ENCODE measurements at regions of chr15 and their contacts with region 1.

Region 1: DNA sequence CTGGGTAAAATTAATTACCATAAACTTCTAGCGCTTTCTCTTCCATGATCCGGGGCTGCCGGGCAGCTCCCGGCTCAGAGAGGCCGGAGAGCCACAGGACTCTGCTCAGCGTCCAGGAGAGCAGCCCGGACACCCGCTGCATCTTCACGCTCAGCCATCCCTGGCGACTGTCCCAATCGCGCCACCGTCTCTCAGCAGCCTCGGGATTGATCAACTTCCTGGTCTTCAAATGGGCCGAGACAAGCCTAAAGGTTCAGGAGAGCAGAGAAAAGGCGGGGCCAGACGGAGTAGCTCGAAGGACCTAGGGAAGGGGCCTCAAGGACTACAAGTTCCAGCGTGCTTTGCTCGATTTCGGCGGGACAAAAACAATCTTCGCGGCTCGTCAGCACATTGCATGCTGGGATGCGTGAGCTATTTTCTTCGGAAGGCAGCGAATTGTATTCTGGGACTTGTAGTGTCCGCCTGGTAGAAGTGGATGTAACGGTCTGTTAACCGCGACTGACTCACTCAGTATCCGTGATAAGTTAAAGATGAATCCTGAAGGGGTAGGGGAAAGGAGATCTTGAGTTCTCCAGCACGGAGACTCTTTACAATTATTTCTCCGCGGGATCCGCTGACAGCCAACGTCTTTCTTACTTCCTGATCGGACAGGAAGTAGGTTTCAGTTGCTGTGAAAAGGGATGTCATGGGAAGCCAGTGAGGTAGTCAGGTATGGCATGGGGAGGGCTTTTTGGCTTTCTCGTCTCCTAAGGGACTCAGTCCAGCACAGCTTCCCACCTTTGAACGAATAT is at the start of gene CIAO2A:
- DNase-seq: peak; percentile 78
- ATAC-seq: peak; percentile 72
- H3K4me3 Mint-ChIP-seq: peak within 1 kb of the TSS; percentile 99
- H3K27ac Mint-ChIP-seq: peak within 1 kb of the TSS; percentile 98
- H3K4me1 Mint-ChIP-seq: peaks cover 93% of the 10 kb centered on the region
- H3K27me3 Mint-ChIP-seq: no peaks in the 10 kb centered on the region
- CTCF ChIP-seq: no peak
- total RNA-seq, gene CIAO2A: 58.4 and 63.2 TPM in 2 replicates

Region 2: DNA sequence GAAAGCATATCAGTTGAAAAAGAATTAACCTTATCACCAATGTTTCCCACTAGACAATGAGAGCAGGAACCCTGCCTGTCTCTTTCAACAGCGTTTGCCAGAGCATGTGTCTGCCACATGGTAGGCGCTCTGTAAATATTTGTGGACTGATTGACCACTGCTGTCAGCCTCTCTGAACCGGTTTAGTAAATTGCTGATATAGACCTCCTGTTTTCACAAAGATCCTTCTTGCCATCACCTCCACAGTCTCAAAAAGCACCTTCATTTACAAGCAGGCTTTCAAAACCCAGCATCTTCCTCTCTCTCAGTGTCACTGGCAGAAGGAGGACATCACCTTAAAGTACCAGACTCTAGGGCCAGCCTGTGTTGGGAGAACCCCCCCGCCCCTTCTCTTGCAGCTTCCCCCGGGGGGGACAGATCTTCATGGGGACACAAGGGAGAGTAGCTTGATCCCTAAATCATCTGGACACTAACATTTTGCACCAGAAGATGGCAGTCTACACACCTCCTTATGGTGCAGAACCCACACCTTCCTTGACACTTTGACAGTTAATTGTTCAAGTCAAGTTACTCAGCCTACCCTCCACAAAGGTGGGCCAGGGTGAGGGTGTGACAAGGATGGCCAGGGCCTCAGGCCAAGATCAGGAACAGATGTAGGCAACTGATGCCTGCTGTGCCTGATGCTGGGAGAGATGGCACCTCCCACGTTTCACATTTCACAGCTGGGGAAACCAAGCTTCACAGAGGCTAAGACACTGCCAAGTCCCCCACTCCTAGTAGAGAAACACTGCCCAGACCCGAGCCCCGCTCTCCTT is 627.2 kb before region 1 on chr15:
- CTCF ChIA-PET with region 1: no interaction called
- POLR2A ChIA-PET with region 1: interaction called, 5 read pairs
- intact Hi-C with region 1: loop called (anchors 5 kb)
- DNase-seq: no peak
- ATAC-seq: peak; percentile 93
- H3K4me3 Mint-ChIP-seq: no peak overlapping the region
- H3K27ac Mint-ChIP-seq: no peak overlapping the region
- H3K4me1 Mint-ChIP-seq: peaks cover 29% of the 10 kb centered on the region
- H3K27me3 Mint-ChIP-seq: no peaks in the 10 kb centered on the region
- CTCF ChIP-seq: peak; percentile 56

Region 3: GRCh38 chr15:63752075-63752684 is 341.6 kb before region 1 on chr15:
- CTCF ChIA-PET with region 1: interaction called, 18 read pairs
- POLR2A ChIA-PET with region 1: interaction called, 3 read pairs
- intact Hi-C with region 1: no loop called
- DNase-seq: no peak
- ATAC-seq: peak; percentile 83
- H3K4me3 Mint-ChIP-seq: no peak overlapping the region
- H3K27ac Mint-ChIP-seq: peak overlapping the region; percentile 59
- H3K4me1 Mint-ChIP-seq: peaks cover 3% of the 10 kb centered on the region
- H3K27me3 Mint-ChIP-seq: no peaks in the 10 kb centered on the region
- CTCF ChIP-seq: no peak

Region 4: GRCh38 chr15:63939531-63940130 is 154.2 kb before region 1 on chr15:
- CTCF ChIA-PET with region 1: no interaction called
- POLR2A ChIA-PET with region 1: no interaction called
- intact Hi-C with region 1: no loop called
- DNase-seq: no peak
- ATAC-seq: no peak
- H3K4me3 Mint-ChIP-seq: no peak overlapping the region
- H3K27ac Mint-ChIP-seq: peak overlapping the region; percentile 46
- H3K4me1 Mint-ChIP-seq: peaks cover 34% of the 10 kb centered on the region
- H3K27me3 Mint-ChIP-seq: no peaks in the 10 kb centered on the region
- CTCF ChIP-seq: no peak

Region 5: DNA sequence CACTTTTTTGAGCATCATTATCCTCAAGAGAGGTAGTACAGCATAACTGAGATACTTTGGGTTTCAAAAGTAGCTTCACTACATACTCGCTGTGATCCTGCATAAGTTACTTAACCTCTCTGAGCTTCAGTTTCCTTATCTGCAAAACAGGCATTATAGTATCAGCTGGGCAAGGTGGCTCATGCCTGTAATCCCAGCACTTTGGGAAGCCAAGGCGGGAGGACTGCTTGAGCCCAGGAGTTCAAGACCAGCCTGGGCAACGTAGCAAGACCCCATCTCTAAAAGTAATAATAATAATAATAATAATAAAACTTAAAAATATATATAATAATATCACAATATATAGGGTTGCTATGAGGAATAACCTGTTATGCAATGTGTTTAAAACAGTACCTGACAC is 11.1 kb before region 1 on chr15:
- CTCF ChIA-PET with region 1: no interaction called
- POLR2A ChIA-PET with region 1: interaction called, 11 read pairs
- intact Hi-C with region 1: no loop called
- DNase-seq: no peak
- ATAC-seq: no peak
- H3K4me3 Mint-ChIP-seq: no peak overlapping the region
- H3K27ac Mint-ChIP-seq: no peak overlapping the region
- H3K4me1 Mint-ChIP-seq: peaks cover 8% of the 10 kb centered on the region
- H3K27me3 Mint-ChIP-seq: no peaks in the 10 kb centered on the region
- CTCF ChIP-seq: no peak

Region 6: GRCh38 chr15:64153480-64154367 is 59.9 kb after region 1 on chr15:
- CTCF ChIA-PET with region 1: interaction called, 14 read pairs
- POLR2A ChIA-PET with region 1: interaction called, 78 read pairs
- intact Hi-C with region 1: loop called (anchors 1 kb)
- DNase-seq: peak; percentile 92
- ATAC-seq: peak; percentile 80
- H3K4me3 Mint-ChIP-seq: peak overlapping the region; percentile 86
- H3K27ac Mint-ChIP-seq: peak overlapping the region; percentile 91
- H3K4me1 Mint-ChIP-seq: peaks cover 69% of the 10 kb centered on the region
- H3K27me3 Mint-ChIP-seq: no peaks in the 10 kb centered on the region
- CTCF ChIP-seq: peak; percentile 61

Region 7: GRCh38 chr15:64387562-64388168 is 293.8 kb after region 1 on chr15 and contains the start of gene TRIP4:
- CTCF ChIA-PET with region 1: no interaction called
- POLR2A ChIA-PET with region 1: interaction called, 10 read pairs
- intact Hi-C with region 1: loop called (anchors 5 kb)
- DNase-seq: peak; percentile 92
- ATAC-seq: peak; percentile 100
- H3K4me3 Mint-ChIP-seq: peak within 1 kb of the TSS; percentile 98
- H3K27ac Mint-ChIP-seq: peak within 1 kb of the TSS; percentile 94
- H3K4me1 Mint-ChIP-seq: peaks cover 25% of the 10 kb centered on the region
- H3K27me3 Mint-ChIP-seq: no peaks in the 10 kb centered on the region
- CTCF ChIP-seq: no peak
- total RNA-seq, gene TRIP4: 26.3 and 35.0 TPM in 2 replicates

Region 8: GRCh38 chr15:65792130-65792987 is 1698.5 kb after region 1 on chr15 and contains the start of gene DENND4A:
- CTCF ChIA-PET with region 1: no interaction called
- POLR2A ChIA-PET with region 1: no interaction called
- intact Hi-C with region 1: loop called (anchors 10 kb)
- DNase-seq: peak; percentile 95
- ATAC-seq: peak; percentile 83
- H3K4me3 Mint-ChIP-seq: peak within 1 kb of the TSS; percentile 90
- H3K27ac Mint-ChIP-seq: peak within 1 kb of the TSS; percentile 98
- H3K4me1 Mint-ChIP-seq: peaks cover 64% of the 10 kb centered on the region
- H3K27me3 Mint-ChIP-seq: no peaks in the 10 kb centered on the region
- CTCF ChIP-seq: no peak
- total RNA-seq, gene DENND4A: 135 and 166 TPM in 2 replicates

Measured in activated B cell treated with CpG ODN at 0.5 μM for 24 hours (primary cell).